Mucosa of descending colon (tissue), 3 donors: ENCODE measurements at regions of chr14 and their contacts with region 1.

Region 1: GRCh38 chr14:20662968-20663732 is 21.2 kb upstream of the RNASE4 start:
- DNase-seq: peak; percentile 83 to 86 (median 84)
- ATAC-seq: peak; percentile 94
- H3K4me3 ChIP-seq: no peak overlapping the region
- H3K4me1 ChIP-seq: peaks cover 10% of the 10 kb centered on the region
- CTCF ChIP-seq: peak; percentile 57

Region 2: DNA sequence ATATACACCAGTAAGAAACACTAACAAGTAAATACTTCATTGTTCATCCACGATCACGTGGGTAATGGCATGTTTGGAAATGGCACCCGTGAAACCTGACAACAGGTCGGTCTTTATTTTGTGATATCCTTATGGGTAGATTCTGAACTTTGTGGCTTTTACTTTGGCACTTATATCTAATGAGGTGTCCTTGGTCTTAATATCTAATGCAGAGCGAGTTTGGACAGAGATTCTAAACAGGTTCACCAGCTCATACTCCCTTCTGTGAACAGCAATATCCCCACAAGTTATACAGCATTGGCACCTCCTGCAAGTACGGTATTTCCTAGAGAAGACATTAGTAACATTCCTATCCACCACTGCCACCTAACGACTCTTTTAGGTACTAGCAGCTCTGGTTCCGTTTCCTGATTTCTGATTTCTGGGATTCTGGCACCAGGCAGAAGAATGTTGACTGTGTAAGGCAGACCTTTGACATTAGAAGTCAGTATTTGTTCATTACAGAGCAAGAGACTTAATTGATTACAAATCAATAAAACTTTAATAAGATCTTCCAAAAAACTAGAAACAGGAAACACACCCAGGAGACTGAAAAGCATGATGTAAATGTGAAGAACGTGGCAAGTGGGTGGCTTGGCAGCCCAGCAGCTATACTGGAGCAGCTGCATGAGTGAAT is 27.8 kb after region 1 on chr14:
- intact Hi-C with region 1: loop called in 1 of 2 experiments (anchors 2 kb)
- DNase-seq: peak in 1 of 3 donors; percentile 80
- ATAC-seq: peak; percentile 75
- H3K4me3 ChIP-seq: no peak overlapping the region
- H3K4me1 ChIP-seq: peaks cover 38% of the 10 kb centered on the region
- CTCF ChIP-seq: peak; percentile 78

Region 3: DNA sequence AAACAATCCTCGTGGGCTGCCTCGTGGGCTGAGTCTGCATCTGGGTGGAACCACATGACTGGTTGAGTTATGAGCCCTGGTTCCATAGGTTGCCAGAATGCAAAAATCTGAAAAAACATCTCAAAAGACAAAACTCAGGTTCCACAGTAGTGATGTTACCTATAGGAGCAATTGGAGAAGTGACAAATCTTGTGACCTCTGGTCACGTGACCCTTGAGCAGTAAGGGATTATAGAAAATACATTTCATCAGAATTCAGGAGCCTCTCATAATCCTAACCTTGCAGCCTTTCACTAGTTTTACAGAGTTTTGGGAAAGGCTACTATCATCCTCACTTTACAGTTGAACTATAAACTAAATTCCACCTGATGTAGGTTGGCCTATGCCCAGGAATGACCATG is 215.5 kb after region 1 on chr14:
- intact Hi-C with region 1: no loop called
- DNase-seq: no peak
- ATAC-seq: no peak
- H3K4me3 ChIP-seq: no peak overlapping the region
- H3K4me1 ChIP-seq: no peaks in the 10 kb centered on the region
- CTCF ChIP-seq: no peak